ENCODE measurements at regions of chrX and their contacts with region 1.

Region 1: GRCh38 chrX:68710870-68711576 is 63.6 kb downstream of the STARD8 start:
- DNase-seq: peak; percentile 20 to 45
- ATAC-seq: peak; percentile 47 to 86
- H3K4me3 ChIP-seq: no peak overlapping the region
- H3K27ac ChIP-seq: no peak overlapping the region
- H3K4me1 ChIP-seq: peaks cover 27 to 31% of the 10 kb centered on the region in 2 donors
- H3K27me3 ChIP-seq: no peaks in the 10 kb centered on the region
- CTCF ChIP-seq: peak; percentile 27 to 67 (median 55)
- POLR2A ChIP-seq: no peak

Region 2: GRCh38 chrX:68112321-68112720 is 598.7 kb before region 1 on chrX:
- in situ Hi-C with region 1: no loop called
- intact Hi-C with region 1: no loop called
- DNase-seq: no peak
- ATAC-seq: no peak
- H3K4me3 ChIP-seq: no peak overlapping the region
- H3K27ac ChIP-seq: no peak overlapping the region
- H3K4me1 ChIP-seq: peaks cover 0 to 4% of the 10 kb centered on the region in 2 donors
- H3K27me3 ChIP-seq: no peaks in the 10 kb centered on the region
- CTCF ChIP-seq: no peak
- POLR2A ChIP-seq: no peak

Region 3: GRCh38 chrX:68196939-68197791 is 513.9 kb before region 1 on chrX:
- in situ Hi-C with region 1: loop called in 1 of 4 experiments (anchors 25 kb)
- intact Hi-C with region 1: loop called (anchors 5 kb)
- DNase-seq: no peak
- ATAC-seq: peak; percentile 69 to 73
- H3K4me3 ChIP-seq: no peak overlapping the region
- H3K27ac ChIP-seq: no peak overlapping the region
- H3K4me1 ChIP-seq: no peaks in the 10 kb centered on the region
- H3K27me3 ChIP-seq: no peaks in the 10 kb centered on the region
- CTCF ChIP-seq: peak; percentile 54 to 66 (median 61)
- POLR2A ChIP-seq: no peak

Region 4: GRCh38 chrX:68511255-68511654 is 199.8 kb before region 1 on chrX:
- in situ Hi-C with region 1: loop called (anchors 10 to 25 kb)
- intact Hi-C with region 1: loop called (anchors 1 kb)
- DNase-seq: no peak
- ATAC-seq: no peak
- H3K4me3 ChIP-seq: no peak overlapping the region
- H3K27ac ChIP-seq: no peak overlapping the region
- H3K4me1 ChIP-seq: peaks cover 7% of the 10 kb centered on the region in 2 donors
- H3K27me3 ChIP-seq: no peaks in the 10 kb centered on the region
- CTCF ChIP-seq: peak; percentile 45 to 85 (median 64)
- POLR2A ChIP-seq: no peak

Region 5: DNA sequence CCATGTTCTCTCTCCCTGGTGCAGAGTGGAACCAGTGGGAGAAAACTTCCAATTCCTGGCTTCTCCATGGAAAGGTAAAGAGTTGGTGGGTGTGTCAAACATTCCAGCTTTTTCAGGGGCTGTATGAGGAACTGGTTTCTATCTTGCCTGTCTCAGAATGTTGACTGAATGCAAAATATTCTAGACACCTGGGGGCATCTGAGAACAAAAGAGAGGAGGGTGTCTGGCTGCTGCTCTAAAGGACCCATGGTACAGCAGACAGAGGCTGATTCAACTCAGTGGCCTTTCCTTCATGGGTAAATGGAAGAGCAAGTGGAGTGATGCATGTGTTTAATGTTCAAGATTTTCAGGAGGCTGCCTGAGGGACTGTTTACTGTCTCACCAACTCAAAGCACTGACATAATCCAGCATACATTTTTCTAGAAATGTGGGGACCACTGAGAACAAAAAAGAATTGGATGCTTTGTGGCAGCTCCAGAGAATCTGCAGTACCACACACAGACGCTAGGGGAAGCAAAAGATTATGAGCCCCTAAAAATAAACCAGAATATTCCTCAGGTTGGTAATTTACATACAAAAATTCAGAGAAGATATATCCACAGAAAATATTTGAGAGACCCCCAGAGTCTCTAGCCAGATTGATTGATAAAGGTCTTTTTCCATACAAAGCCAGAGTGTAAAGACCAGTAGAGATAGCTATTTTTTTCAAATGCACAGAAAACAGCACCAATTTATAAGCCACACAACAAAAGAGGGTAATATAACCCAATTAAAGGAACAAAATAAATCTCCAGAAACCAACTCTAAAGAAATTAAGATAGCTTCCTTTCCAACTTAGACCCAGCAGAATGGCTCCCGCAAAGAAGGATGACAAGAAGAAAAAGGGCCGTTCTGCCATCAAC is 111.5 kb before region 1 on chrX:
- in situ Hi-C with region 1: loop called in 1 of 4 experiments (anchors 25 kb)
- intact Hi-C with region 1: loop called (anchors 2 kb)
- DNase-seq: no peak
- ATAC-seq: no peak
- H3K4me3 ChIP-seq: no peak overlapping the region
- H3K27ac ChIP-seq: no peak overlapping the region
- H3K4me1 ChIP-seq: no peaks in the 10 kb centered on the region
- H3K27me3 ChIP-seq: peaks cover 0 to 7% (median 0%) of the 10 kb centered on the region in 3 donors
- CTCF ChIP-seq: peak; percentile 37 to 67 (median 56)
- POLR2A ChIP-seq: no peak